HCT116 (cell line): ENCODE measurements at regions of chrX and their contacts with region 1.

Region 1: GRCh38 chrX:15854712-15855567 is at the start of gene AP1S2:
- DNase-seq: peak; percentile 78
- ATAC-seq: peak; percentile 95
- H3K4me3 ChIP-seq: peak within 1 kb of the TSS; percentile 56 to 65
- H3K27ac ChIP-seq: peak within 1 kb of the TSS; percentile 54
- H3K4me1 ChIP-seq: peaks cover 0 to 18% of the 10 kb centered on the region in 2 experiments; a peak in 2 of 4 replicates
- H3K27me3 ChIP-seq: no peaks in the 10 kb centered on the region
- CTCF ChIP-seq: no peak
- POLR2A ChIP-seq: no peak
- RAD21 ChIP-seq: no peak
- total RNA-seq, gene AP1S2: 19.9 TPM

Region 2: GRCh38 chrX:15877380-15877779 is 22.4 kb after region 1 on chrX:
- CTCF ChIA-PET with region 1: no interaction called
- POLR2A ChIA-PET with region 1: no interaction called
- RAD21 ChIA-PET with region 1: no interaction called
- intact Hi-C with region 1: no loop called
- DNase-seq: no peak
- ATAC-seq: no peak
- H3K4me3 ChIP-seq: no peak overlapping the region
- H3K27ac ChIP-seq: no peak overlapping the region
- H3K4me1 ChIP-seq: no peaks in the 10 kb centered on the region
- H3K27me3 ChIP-seq: no peaks in the 10 kb centered on the region
- CTCF ChIP-seq: no peak
- POLR2A ChIP-seq: no peak
- RAD21 ChIP-seq: no peak

Region 3: GRCh38 chrX:16436348-16437188 is 581.6 kb after region 1 on chrX:
- CTCF ChIA-PET with region 1: no interaction called
- POLR2A ChIA-PET with region 1: no interaction called
- RAD21 ChIA-PET with region 1: no interaction called
- intact Hi-C with region 1: loop called (anchors 10 kb)
- DNase-seq: peak; percentile 65
- ATAC-seq: peak; percentile 99
- H3K4me3 ChIP-seq: no peak overlapping the region
- H3K27ac ChIP-seq: no peak overlapping the region
- H3K4me1 ChIP-seq: peaks cover 0 to 4% of the 10 kb centered on the region in 2 experiments; a peak in 2 of 4 replicates
- H3K27me3 ChIP-seq: no peaks in the 10 kb centered on the region
- CTCF ChIP-seq: peak; percentile 40 to 63 (median 56); a peak in 5 of 6 replicates
- POLR2A ChIP-seq: no peak
- RAD21 ChIP-seq: peak; percentile 51

Region 4: GRCh38 chrX:16719334-16720084 is 864.6 kb after region 1 on chrX and contains the start of gene SYAP1:
- CTCF ChIA-PET with region 1: no interaction called
- POLR2A ChIA-PET with region 1: no interaction called
- RAD21 ChIA-PET with region 1: no interaction called
- intact Hi-C with region 1: loop called (anchors 10 kb)
- DNase-seq: peak; percentile 93
- ATAC-seq: peak; percentile 96
- H3K4me3 ChIP-seq: peak within 1 kb of the TSS; percentile 75 to 82
- H3K27ac ChIP-seq: peak within 1 kb of the TSS; percentile 77
- H3K4me1 ChIP-seq: peaks cover 4 to 14% of the 10 kb centered on the region in 2 experiments; a peak in 1 of 4 replicates
- H3K27me3 ChIP-seq: no peaks in the 10 kb centered on the region
- CTCF ChIP-seq: no peak
- POLR2A ChIP-seq: peak; percentile 86
- RAD21 ChIP-seq: no peak
- total RNA-seq, gene SYAP1: 24.8 TPM